MCF 10A (cell line): ENCODE measurements at regions of chr7 and their contacts with region 1.

Region 1: DNA sequence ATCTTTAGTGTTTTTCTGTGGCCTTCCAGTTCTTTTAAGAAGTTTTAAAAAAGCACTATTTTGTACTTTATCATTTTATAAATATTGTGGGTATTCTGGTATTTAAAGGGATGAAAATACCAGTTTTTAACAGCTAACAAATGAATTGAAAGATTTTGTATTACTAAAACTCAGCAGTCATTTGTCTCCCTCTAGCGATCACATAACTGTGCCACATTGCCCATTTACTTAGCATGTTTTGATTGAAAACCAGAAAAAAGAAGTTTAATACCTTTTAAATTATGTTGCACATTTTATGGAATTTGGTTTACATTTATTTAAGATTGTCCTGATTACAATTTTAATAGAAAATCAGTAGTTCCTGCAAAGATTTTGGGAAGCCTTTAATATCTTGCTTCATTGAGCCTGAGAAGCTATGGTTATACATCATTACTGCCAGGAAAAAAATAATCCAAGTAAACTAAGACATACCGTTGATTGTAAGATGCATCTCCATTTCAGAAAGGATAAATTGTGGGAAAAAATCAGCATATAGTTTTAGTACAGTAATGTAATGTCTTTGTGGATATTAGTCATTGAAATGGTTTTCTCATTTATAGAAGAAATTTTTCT is 34.9 kb downstream of the TAX1BP1 start:
- DNase-seq: peak; percentile 48
- H3K4me3 Mint-ChIP-seq: no peak overlapping the region
- H3K27ac Mint-ChIP-seq: no peak overlapping the region
- H3K4me1 Mint-ChIP-seq: peaks cover 10% of the 10 kb centered on the region
- H3K27me3 Mint-ChIP-seq: no peaks in the 10 kb centered on the region
- CTCF ChIP-seq: peak; percentile 71

Region 2: DNA sequence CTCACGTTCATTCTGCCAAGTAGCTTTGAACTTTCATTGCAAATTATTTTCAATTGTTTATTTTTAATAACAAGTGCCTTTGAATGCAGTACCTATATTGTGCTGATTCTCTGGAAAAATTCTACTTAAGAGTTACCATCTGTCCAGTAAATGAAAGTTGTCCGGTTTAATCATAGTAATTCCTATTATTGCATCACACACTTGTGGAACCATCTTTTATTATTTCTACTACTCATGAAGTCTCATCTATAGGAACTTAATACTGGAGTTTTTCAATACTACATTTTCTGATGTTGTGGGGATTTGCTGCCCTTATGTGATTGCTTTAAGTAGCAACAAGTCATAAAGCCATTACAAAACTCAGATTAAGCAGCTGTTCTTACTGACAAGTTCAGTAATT is 894.0 kb before region 1 on chr7:
- CTCF ChIA-PET with region 1: no interaction called
- POLR2A ChIA-PET with region 1: no interaction called
- intact Hi-C with region 1: no loop called
- DNase-seq: no peak
- H3K4me3 Mint-ChIP-seq: no peak overlapping the region
- H3K27ac Mint-ChIP-seq: no peak overlapping the region
- H3K4me1 Mint-ChIP-seq: no peaks in the 10 kb centered on the region
- H3K27me3 Mint-ChIP-seq: no peaks in the 10 kb centered on the region
- CTCF ChIP-seq: no peak

Region 3: DNA sequence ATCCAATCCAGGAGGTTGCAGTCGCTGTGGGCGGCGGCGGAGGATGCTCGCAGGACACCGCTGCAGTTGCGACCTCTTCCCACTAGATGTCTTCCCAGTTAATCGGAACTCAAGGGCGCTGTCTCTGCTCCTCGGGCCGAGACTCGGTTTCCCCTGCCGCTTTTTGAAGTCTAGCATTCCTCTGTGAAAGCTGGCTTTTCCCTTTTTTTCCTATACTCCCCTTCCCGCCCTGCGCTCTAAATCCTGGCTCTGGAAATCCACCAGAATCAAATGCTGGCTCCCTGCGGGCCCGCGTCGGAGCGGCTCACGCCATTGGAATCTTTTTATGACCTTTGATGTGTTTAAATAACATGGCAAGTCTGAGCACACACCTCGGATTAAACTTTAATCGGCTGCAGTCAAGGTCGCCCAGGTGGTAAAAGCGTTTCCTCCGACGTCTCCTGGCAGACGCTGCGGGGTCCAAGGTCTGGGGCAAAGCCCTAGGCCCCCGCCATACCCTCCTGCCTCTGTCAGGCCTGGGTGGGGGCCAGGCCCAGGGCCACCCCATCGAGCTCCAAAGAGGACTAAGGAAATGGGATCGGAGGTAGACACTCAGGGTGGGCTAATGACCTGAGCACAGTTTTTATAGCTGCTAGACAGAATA is 564.3 kb before region 1 on chr7:
- CTCF ChIA-PET with region 1: interaction called, 15 read pairs
- POLR2A ChIA-PET with region 1: no interaction called
- intact Hi-C with region 1: no loop called
- DNase-seq: peak; percentile 52
- H3K4me3 Mint-ChIP-seq: no peak overlapping the region
- H3K27ac Mint-ChIP-seq: no peak overlapping the region
- H3K4me1 Mint-ChIP-seq: no peaks in the 10 kb centered on the region
- H3K27me3 Mint-ChIP-seq: peaks cover 18% of the 10 kb centered on the region
- CTCF ChIP-seq: peak; percentile 81

Region 4: DNA sequence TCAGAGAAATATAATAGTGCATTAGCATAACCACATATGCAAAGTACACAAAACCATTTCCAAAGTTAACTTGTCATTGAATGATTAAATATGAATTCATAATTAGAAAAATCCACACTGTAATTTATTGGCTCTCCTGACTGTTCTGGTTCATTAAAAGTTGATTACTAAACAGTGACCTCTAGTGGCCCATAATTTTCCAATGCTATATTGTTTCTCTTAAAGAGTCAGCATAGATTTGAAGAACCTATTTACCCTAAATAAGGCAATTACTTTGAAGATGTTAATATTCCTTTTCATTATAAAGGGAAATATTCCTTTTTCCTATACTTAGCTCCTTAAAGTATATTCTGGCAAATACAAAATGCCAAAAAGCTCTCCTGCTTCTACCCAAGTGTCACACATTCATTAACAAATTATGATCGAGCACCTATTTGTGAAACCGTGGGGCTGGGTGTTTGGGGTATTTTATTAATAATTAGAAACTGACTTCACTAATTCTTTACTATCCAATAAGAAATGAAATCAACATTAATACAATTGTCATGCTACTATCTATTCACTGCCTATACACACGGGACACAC is 198.4 kb before region 1 on chr7:
- CTCF ChIA-PET with region 1: interaction called, 4 read pairs
- POLR2A ChIA-PET with region 1: no interaction called
- intact Hi-C with region 1: loop called (anchors 10 kb)
- DNase-seq: peak; percentile 63
- H3K4me3 Mint-ChIP-seq: no peak overlapping the region
- H3K27ac Mint-ChIP-seq: no peak overlapping the region
- H3K4me1 Mint-ChIP-seq: peaks cover 5% of the 10 kb centered on the region
- H3K27me3 Mint-ChIP-seq: no peaks in the 10 kb centered on the region
- CTCF ChIP-seq: peak; percentile 44

Region 5: GRCh38 chr7:27593226-27593625 is 181.6 kb before region 1 on chr7:
- CTCF ChIA-PET with region 1: no interaction called
- POLR2A ChIA-PET with region 1: no interaction called
- intact Hi-C with region 1: no loop called
- DNase-seq: no peak
- H3K4me3 Mint-ChIP-seq: no peak overlapping the region
- H3K27ac Mint-ChIP-seq: no peak overlapping the region
- H3K4me1 Mint-ChIP-seq: no peaks in the 10 kb centered on the region
- H3K27me3 Mint-ChIP-seq: no peaks in the 10 kb centered on the region
- CTCF ChIP-seq: no peak

Region 6: DNA sequence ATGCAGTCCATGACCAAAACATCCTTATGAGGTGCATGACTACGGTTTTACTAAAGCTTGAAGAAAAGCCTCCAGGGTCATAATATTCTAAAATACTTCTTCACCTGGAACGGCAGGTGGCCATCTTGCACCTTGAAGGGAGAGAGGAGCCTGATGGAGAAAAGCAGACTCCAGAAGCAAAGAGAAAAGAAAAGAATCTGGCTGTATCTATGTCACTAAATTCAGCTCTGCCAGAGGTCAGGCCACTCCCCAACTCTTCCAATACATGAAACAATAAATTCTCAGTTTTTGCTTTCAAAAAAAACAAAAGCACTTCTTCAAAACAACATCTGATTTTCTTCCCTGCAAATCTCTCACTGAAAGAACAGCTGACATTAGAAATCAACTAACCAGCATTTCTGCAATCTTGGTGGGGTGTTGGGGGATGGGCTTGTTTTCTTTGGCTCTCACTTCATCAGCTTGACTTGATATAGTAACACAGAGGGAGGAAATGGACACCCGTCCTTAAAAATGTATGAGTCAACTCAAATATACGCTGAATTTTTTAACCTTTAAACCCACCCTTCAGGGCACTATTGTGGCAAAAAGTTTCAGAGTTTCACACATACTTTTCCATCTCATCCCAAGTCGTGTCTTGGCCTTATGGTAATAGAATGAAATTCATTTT is 133.8 kb before region 1 on chr7:
- CTCF ChIA-PET with region 1: interaction called, 9 read pairs
- POLR2A ChIA-PET with region 1: interaction called, 8 read pairs
- intact Hi-C with region 1: loop called (anchors 5 kb)
- DNase-seq: peak; percentile 90
- H3K4me3 Mint-ChIP-seq: peak overlapping the region; percentile 67
- H3K27ac Mint-ChIP-seq: peak overlapping the region; percentile 82
- H3K4me1 Mint-ChIP-seq: peaks cover 51% of the 10 kb centered on the region
- H3K27me3 Mint-ChIP-seq: no peaks in the 10 kb centered on the region
- CTCF ChIP-seq: no peak

Region 7: GRCh38 chr7:27689591-27690164 is 85.1 kb before region 1 on chr7:
- CTCF ChIA-PET with region 1: interaction called, 4 read pairs
- POLR2A ChIA-PET with region 1: no interaction called
- intact Hi-C with region 1: loop called (anchors 1 kb)
- DNase-seq: peak; percentile 37
- H3K4me3 Mint-ChIP-seq: no peak overlapping the region
- H3K27ac Mint-ChIP-seq: no peak overlapping the region
- H3K4me1 Mint-ChIP-seq: no peaks in the 10 kb centered on the region
- H3K27me3 Mint-ChIP-seq: no peaks in the 10 kb centered on the region
- CTCF ChIP-seq: no peak

Region 8: GRCh38 chr7:27745064-27745583 is 29.7 kb before region 1 on chr7:
- CTCF ChIA-PET with region 1: interaction called, 43 read pairs
- POLR2A ChIA-PET with region 1: interaction called, 41 read pairs
- intact Hi-C with region 1: no loop called
- DNase-seq: peak; percentile 62
- H3K4me3 Mint-ChIP-seq: no peak overlapping the region
- H3K27ac Mint-ChIP-seq: peak overlapping the region; percentile 77
- H3K4me1 Mint-ChIP-seq: peaks cover 32% of the 10 kb centered on the region
- H3K27me3 Mint-ChIP-seq: no peaks in the 10 kb centered on the region
- CTCF ChIP-seq: peak; percentile 63

Region 9: GRCh38 chr7:27901028-27901760 is 126.4 kb after region 1 on chr7:
- CTCF ChIA-PET with region 1: no interaction called
- POLR2A ChIA-PET with region 1: no interaction called
- intact Hi-C with region 1: no loop called
- DNase-seq: peak; percentile 14
- H3K4me3 Mint-ChIP-seq: peak overlapping the region; percentile 62
- H3K27ac Mint-ChIP-seq: peak overlapping the region; percentile 88
- H3K4me1 Mint-ChIP-seq: peaks cover 12% of the 10 kb centered on the region
- H3K27me3 Mint-ChIP-seq: no peaks in the 10 kb centered on the region
- CTCF ChIP-seq: no peak

Region 10: GRCh38 chr7:27921081-27921836 is 146.4 kb after region 1 on chr7:
- CTCF ChIA-PET with region 1: interaction called, 11 read pairs
- POLR2A ChIA-PET with region 1: no interaction called
- intact Hi-C with region 1: loop called (anchors 5 kb)
- DNase-seq: peak; percentile 72
- H3K4me3 Mint-ChIP-seq: no peak overlapping the region
- H3K27ac Mint-ChIP-seq: no peak overlapping the region
- H3K4me1 Mint-ChIP-seq: no peaks in the 10 kb centered on the region
- H3K27me3 Mint-ChIP-seq: no peaks in the 10 kb centered on the region
- CTCF ChIP-seq: peak; percentile 46